Heart right ventricle (tissue), 16 donors: ENCODE measurements at regions of chr3 and their contacts with region 1.

Region 1: DNA sequence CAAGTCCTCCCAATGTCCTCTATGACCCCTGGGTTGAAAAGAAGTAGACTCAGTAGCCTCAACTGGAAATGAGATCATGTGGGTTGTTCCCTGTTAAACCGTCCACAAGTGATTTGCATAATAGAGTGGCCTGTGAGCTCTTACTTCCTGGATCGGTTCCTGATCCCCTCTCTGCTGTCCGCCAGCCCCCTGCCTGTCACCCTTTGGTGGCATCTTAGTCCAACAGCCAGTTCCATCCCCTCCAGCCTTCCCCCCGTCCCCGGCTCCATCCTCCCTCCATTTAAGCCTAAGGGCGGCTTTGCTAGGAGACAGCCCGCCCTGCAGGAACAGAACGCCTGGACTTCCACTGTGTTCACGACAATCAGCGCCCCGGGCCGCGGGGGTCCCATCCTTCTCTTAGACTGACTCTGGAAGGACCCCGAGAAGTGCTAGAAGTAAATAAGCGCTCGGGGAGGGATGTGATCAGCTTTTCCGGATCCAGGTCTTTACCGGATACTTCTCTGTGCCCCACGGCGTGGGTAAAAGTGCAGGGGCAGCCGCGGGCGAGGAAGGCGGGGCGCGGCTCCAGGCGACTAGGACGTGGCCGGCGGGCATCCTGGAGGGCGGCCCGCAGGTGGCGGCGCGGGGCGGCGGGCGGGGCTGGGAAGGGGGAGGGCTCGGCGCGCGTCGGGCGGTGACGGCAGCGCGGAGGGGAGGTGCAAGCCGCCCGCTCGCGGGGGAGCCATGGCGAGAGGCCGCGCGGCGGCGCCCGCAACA is 51.2 kb upstream of the ULK4 start:
- DNase-seq: peak; percentile 74 to 83
- ATAC-seq: peak; percentile 71 to 89 (median 83)
- H3K4me3 ChIP-seq: peak overlapping the region; percentile 40 to 97 (median 88)
- H3K27ac ChIP-seq: peak overlapping the region; percentile 65 to 97 (median 92)
- H3K4me1 ChIP-seq: peaks cover 0 to 50% (median 38%) of the 10 kb centered on the region in 9 donors
- H3K27me3 ChIP-seq: no peaks in the 10 kb centered on the region
- CTCF ChIP-seq: peak in 3 of 9 donors; percentile 12 to 27 (median 19)

Region 2: GRCh38 chr3:41893977-41894376 is 119.1 kb before region 1 on chr3:
- intact Hi-C with region 1: loop called in 4 of 10 experiments (anchors 5 to 10 kb)
- DNase-seq: peak in 1 of 2 donors; percentile 22
- ATAC-seq: no peak
- H3K4me3 ChIP-seq: no peak overlapping the region
- H3K27ac ChIP-seq: no peak overlapping the region
- H3K4me1 ChIP-seq: peaks cover 0 to 13% (median 0%) of the 10 kb centered on the region in 9 donors
- H3K27me3 ChIP-seq: no peaks in the 10 kb centered on the region
- CTCF ChIP-seq: peak in 8 of 9 donors; percentile 33 to 73 (median 60)

Region 3: DNA sequence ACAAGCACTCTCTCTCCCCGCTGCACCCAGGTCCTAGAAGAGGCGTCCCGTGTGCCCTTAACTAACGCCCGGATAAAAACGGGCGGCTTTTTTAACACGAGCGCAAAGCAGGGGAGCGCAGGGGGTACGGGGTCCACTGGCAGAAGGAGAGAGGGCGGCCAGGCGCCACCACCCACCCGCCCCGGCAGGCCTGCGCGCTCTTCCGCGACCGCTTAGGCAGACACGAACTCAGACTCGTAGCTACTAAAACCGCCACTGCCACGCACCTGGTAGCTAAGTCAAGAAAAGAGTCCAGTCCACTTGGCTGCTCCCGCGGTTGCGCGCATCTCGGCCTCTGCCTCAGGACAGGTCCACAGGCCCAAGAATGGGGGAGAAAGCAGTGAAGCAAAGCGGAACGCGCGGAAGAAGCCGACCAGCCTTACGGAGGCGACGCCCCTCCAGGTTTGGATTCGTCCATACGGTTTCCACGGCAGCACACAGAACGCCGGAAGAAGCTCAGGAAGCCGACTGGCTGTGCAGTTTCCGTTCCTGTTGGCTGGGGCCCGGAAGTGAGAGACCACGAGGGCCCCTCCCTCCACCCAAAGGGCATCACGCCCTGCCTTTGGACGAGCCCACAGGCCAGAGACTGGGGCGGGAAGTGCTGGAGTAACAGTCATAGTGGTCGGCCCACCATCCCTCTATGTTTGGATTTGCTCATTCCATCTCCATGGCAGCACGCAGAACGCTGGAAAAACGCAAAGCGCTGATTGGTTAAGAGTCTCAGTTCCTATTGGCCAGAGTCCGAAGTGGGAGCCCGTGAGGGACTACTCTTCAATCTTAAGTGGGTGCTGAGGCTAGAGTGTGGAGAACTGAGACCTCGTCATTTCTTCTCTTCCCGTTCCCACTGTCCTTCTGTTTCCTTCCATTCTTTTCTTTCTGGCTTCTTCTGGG is 51.1 kb before region 1 on chr3 and contains the start of gene ULK4:
- intact Hi-C with region 1: loop called in 5 of 10 experiments (anchors 2 to 5 kb)
- DNase-seq: peak; percentile 95 to 98
- ATAC-seq: peak; percentile 97 to 99 (median 98)
- H3K4me3 ChIP-seq: peak within 1 kb of the TSS; percentile 78 to 97 (median 93)
- H3K27ac ChIP-seq: peak within 1 kb of the TSS in 9 of 10 donors; percentile 46 to 87 (median 75)
- H3K4me1 ChIP-seq: peaks cover 0 to 18% (median 12%) of the 10 kb centered on the region in 9 donors
- H3K27me3 ChIP-seq: no peaks in the 10 kb centered on the region
- CTCF ChIP-seq: no peak
- total RNA-seq, gene ULK4: 1.8 to 11.4 (median 2.9) TPM

Region 4: DNA sequence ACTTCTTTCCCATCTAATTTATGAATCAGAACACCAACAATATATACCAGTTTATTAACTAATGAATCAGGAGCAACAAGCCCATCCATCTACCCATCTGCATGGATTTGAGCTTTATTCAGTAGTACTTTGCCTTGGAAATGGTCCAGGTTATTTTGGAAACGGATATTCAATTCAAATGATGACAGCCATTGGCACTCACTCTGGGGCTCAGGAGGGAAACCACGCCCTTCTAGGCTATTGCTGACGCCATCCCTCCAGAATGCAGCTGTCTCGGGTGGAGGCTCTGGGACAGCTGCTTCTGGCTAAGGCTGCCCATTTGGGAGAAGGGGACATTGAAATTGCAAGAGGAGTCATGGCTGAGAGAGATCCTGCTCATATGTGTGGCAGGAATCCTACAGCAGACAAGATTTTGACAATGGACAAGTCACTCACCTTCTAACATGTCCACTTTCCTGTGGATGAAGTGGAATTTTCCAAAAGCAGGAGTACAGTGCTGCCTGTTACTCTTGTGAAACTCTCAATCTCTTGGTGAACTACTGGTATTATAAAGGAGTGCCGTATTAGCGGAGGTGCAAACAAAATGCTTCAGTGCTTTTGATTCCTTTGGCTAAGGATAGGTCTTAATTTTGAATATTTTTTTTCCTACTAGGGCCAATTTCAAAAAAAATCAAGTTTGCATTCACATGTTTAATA is 48.7 kb after region 1 on chr3:
- intact Hi-C with region 1: loop called in 5 of 10 experiments (anchors 2 to 5 kb)
- DNase-seq: peak; percentile 74 to 93
- ATAC-seq: peak; percentile 88 to 94 (median 91)
- H3K4me3 ChIP-seq: peak overlapping the region in 4 of 10 donors; percentile 0 to 35 (median 20)
- H3K27ac ChIP-seq: peak overlapping the region; percentile 59 to 95 (median 90)
- H3K4me1 ChIP-seq: peaks cover 19 to 100% (median 90%) of the 10 kb centered on the region in 9 donors
- H3K27me3 ChIP-seq: no peaks in the 10 kb centered on the region
- CTCF ChIP-seq: no peak

Region 5: DNA sequence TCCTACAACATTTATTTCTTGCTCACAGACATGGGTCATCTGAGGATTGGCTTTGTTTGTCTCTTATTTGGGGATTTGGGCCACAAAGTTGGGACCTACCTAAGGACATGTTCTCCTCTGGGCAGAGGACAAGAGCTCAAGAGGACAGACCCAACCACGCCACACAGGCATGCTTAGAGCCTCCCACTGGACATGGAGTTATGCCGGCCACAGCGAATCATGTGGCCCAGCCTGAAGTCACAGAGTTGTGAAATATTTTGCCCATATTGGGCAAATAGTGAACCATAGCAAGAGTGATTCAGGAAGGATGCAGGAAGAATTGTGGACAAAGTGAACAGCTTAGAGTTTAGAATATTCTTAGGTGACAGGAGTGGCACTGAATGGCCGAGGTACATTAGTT is 87.9 kb after region 1 on chr3:
- intact Hi-C with region 1: loop called in 9 of 10 experiments (anchors 1 to 5 kb)
- DNase-seq: peak; percentile 23 to 43
- ATAC-seq: peak; percentile 40 to 80 (median 61)
- H3K4me3 ChIP-seq: no peak overlapping the region
- H3K27ac ChIP-seq: peak overlapping the region in 9 of 10 donors; percentile 16 to 81 (median 63)
- H3K4me1 ChIP-seq: peaks cover 26 to 78% (median 68%) of the 10 kb centered on the region in 9 donors
- H3K27me3 ChIP-seq: no peaks in the 10 kb centered on the region
- CTCF ChIP-seq: no peak

Region 6: DNA sequence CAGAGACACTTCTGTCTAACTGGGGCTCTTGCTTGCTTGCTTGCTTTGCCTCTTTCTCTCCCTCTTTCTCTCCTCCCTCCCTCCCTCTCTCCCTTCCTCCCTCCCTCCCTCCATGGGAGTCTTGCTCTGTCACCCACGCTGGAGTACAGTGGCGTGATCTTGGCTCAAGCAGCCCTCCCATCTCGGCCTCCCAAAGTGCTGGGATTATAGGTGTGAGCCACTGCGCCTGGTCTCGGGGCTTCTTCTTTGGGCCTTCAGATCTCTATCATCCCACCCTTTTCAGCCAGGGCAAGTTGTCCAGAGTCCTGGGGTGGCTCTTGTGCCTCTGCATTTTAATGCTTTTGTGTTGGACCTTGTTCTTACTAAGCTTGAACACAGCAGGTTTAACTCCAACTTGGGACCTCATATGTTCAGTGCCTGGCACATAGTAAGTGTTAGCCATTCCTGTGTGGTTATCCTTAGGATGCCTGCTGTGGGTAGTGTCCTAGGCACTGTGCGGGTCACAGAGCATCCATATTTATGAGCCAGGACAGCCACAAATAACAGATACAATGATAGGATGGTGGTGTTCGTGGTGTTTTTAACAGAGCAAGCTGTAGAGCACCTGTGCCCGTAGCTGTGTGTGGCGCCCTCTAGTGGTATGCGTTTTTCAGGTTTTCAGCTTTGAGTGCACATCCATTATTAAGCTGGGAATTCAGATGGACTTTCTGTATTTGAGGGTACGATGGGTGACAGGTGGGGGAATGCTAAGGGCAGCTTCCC is 177.8 kb after region 1 on chr3:
- intact Hi-C with region 1: loop called in 7 of 10 experiments (anchors 5 to 10 kb)
- DNase-seq: peak in 1 of 2 donors; percentile 72
- ATAC-seq: peak; percentile 34 to 69 (median 57)
- H3K4me3 ChIP-seq: no peak overlapping the region
- H3K27ac ChIP-seq: peak overlapping the region in 2 of 10 donors; percentile 5 to 67
- H3K4me1 ChIP-seq: peaks cover 0 to 71% (median 44%) of the 10 kb centered on the region in 9 donors
- H3K27me3 ChIP-seq: no peaks in the 10 kb centered on the region
- CTCF ChIP-seq: peak; percentile 79 to 90 (median 82)